Activated CD8-positive, alpha-beta T cell treated with anti-CD3 and anti-CD28 coated beads for 36 hours (primary cell): ENCODE measurements at regions of chrX and their contacts with region 1.

Region 1: GRCh38 chrX:155216179-155216939 is at the start of gene VBP1:
- DNase-seq: peak; percentile 91
- ATAC-seq: peak; percentile 98
- H3K4me3 Mint-ChIP-seq: peak within 1 kb of the TSS; percentile 99
- H3K27ac Mint-ChIP-seq: peak within 1 kb of the TSS; percentile 91
- H3K4me1 Mint-ChIP-seq: peaks cover 13% of the 10 kb centered on the region
- H3K27me3 Mint-ChIP-seq: no peaks in the 10 kb centered on the region
- CTCF ChIP-seq: peak; percentile 49
- total RNA-seq, gene VBP1: 76.6 to 81.0 TPM

Region 2: GRCh38 chrX:155251391-155251790 is 35.0 kb after region 1 on chrX:
- CTCF ChIA-PET with region 1: no interaction called
- POLR2A ChIA-PET with region 1: no interaction called
- intact Hi-C with region 1: no loop called
- DNase-seq: no peak
- ATAC-seq: no peak
- H3K4me3 Mint-ChIP-seq: no peak overlapping the region
- H3K27ac Mint-ChIP-seq: no peak overlapping the region
- H3K4me1 Mint-ChIP-seq: peaks cover 2% of the 10 kb centered on the region
- H3K27me3 Mint-ChIP-seq: no peaks in the 10 kb centered on the region
- CTCF ChIP-seq: no peak

Region 3: DNA sequence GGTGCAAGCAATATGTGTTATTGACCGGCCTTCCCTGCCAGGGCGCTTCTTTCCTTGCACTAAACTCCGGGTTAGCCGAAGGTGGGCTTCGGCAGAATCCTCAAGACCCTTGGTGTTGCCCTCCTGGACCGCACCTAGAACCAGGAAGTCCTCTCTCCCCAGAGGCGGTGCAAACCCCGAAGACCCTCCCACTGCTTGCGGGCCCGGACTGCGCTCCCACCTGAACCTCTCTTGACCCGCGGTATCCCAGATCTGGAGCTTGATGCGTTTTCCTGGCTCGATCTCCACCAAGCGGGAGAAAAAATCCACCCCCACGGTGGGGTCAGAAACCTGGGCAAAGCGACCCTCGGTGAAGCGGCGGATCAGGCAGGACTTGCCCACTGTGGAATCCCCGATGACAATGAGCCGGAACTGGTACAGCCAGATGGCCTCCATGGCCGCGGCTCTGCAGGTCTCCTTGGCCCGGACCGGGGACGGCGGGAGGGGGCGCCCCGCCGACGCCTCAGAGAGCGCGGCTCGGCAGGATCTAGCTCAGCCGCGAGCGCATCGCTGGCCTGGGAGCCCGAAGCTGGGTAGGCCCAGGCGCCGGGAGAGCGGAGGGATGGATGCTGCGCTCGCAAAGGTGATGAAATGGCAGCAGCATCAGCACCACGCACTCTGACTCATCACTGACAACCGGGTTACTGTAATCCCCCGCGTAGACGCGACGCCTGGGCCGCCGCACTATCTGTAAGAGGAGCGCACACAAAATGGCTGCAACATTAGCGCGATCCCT is 47.7 kb after region 1 on chrX and contains the start of gene RAB39B:
- CTCF ChIA-PET with region 1: interaction called, 5 read pairs
- POLR2A ChIA-PET with region 1: interaction called, 10 read pairs
- intact Hi-C with region 1: no loop called
- DNase-seq: peak; percentile 89
- ATAC-seq: peak; percentile 94
- H3K4me3 Mint-ChIP-seq: peak within 1 kb of the TSS; percentile 67
- H3K27ac Mint-ChIP-seq: peak within 1 kb of the TSS; percentile 88
- H3K4me1 Mint-ChIP-seq: peaks cover 16% of the 10 kb centered on the region
- H3K27me3 Mint-ChIP-seq: no peaks in the 10 kb centered on the region
- CTCF ChIP-seq: no peak
- total RNA-seq, gene RAB39B: 12.0 to 13.2 TPM